ENCODE measurements at regions of chr4 and their contacts with region 1.

Region 1: DNA sequence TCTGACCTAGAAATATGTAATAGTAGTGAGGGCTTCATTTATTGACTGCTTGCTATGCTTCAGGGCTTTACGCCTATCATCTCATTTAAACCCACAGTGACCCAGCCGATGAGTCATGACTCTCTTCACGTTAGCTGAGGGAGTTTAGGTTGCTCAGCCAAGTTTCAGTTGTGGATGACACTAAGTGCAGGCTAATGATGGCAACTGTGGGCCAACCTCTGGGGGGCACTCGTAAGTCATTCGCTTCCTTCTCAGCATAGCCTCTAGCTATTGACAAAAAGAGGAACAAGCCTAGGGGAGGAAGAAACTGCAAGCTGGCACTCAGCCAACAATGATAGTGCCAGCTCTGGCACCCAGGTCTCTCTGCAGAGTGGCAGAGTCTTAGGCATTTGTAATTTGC is 325.0 kb downstream of the ARHGAP10 start:
- DNase-seq: peak; percentile 30 to 80 (median 73)
- ATAC-seq: peak; percentile 59
- H3K4me3 ChIP-seq: no peak overlapping the region
- H3K4me3 Mint-ChIP-seq: peak overlapping the region; percentile 33
- H3K27ac ChIP-seq: peak overlapping the region in 1 of 2 experiments; percentile 32
- H3K27ac Mint-ChIP-seq: peak overlapping the region; percentile 94
- H3K4me1 ChIP-seq: peaks cover 94% of the 10 kb centered on the region
- H3K4me1 Mint-ChIP-seq: peaks cover 93% of the 10 kb centered on the region
- H3K27me3 ChIP-seq: no peaks in the 10 kb centered on the region
- H3K27me3 Mint-ChIP-seq: no peaks in the 10 kb centered on the region
- CTCF ChIP-seq: no peak

Region 2: GRCh38 chr4:147617173-147617840 is 439.6 kb before region 1 on chr4 and contains the start of gene TMEM184C:
- CTCF ChIA-PET with region 1: no interaction called
- POLR2A ChIA-PET with region 1: no interaction called
- intact Hi-C with region 1: loop called in 1 of 2 experiments (anchors 10 kb)
- DNase-seq: peak; percentile 98 to 99 (median 99)
- ATAC-seq: peak; percentile 96
- H3K4me3 ChIP-seq: peak within 1 kb of the TSS; percentile 62 to 74
- H3K4me3 Mint-ChIP-seq: peak within 1 kb of the TSS; percentile 91
- H3K27ac ChIP-seq: peak within 1 kb of the TSS; percentile 81
- H3K27ac Mint-ChIP-seq: peak within 1 kb of the TSS; percentile 95
- H3K4me1 ChIP-seq: peaks cover 40% of the 10 kb centered on the region
- H3K4me1 Mint-ChIP-seq: peaks cover 46% of the 10 kb centered on the region
- H3K27me3 ChIP-seq: no peaks in the 10 kb centered on the region
- H3K27me3 Mint-ChIP-seq: no peaks in the 10 kb centered on the region
- CTCF ChIP-seq: no peak
- total RNA-seq, gene TMEM184C: 10.9 to 11.7 TPM

Region 3: GRCh38 chr4:147924604-147925412 is 132.1 kb before region 1 on chr4:
- CTCF ChIA-PET with region 1: no interaction called
- POLR2A ChIA-PET with region 1: no interaction called
- intact Hi-C with region 1: loop called in 1 of 2 experiments (anchors 10 kb)
- DNase-seq: peak in 2 of 9 experiments; percentile 18 to 31
- ATAC-seq: no peak
- H3K4me3 ChIP-seq: no peak overlapping the region
- H3K4me3 Mint-ChIP-seq: no peak overlapping the region
- H3K27ac ChIP-seq: no peak overlapping the region
- H3K27ac Mint-ChIP-seq: no peak overlapping the region
- H3K4me1 ChIP-seq: no peaks in the 10 kb centered on the region
- H3K4me1 Mint-ChIP-seq: no peaks in the 10 kb centered on the region
- H3K27me3 ChIP-seq: no peaks in the 10 kb centered on the region
- H3K27me3 Mint-ChIP-seq: no peaks in the 10 kb centered on the region
- CTCF ChIP-seq: no peak

Region 4: DNA sequence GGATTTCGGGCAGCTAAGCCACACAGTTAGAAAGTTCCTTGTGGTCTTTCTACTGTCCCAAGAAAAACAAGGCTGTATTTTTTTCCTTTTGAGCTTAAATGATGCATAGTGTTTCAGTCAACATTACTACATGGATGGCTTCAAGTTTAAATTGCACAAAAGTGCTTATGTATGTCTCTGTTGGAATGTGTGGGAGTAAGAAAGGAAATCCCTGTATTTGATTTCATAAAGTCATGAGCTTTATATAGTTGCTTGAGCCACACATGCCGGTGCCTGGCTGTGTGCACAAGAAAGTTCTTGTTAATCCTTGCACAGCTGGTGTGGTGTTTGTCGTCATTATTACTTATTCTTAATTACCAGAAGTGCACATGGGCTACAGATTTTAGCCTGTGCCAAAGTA is 62.8 kb before region 1 on chr4:
- CTCF ChIA-PET with region 1: no interaction called
- POLR2A ChIA-PET with region 1: no interaction called
- intact Hi-C with region 1: no loop called
- DNase-seq: no peak
- ATAC-seq: no peak
- H3K4me3 ChIP-seq: no peak overlapping the region
- H3K4me3 Mint-ChIP-seq: no peak overlapping the region
- H3K27ac ChIP-seq: no peak overlapping the region
- H3K27ac Mint-ChIP-seq: no peak overlapping the region
- H3K4me1 ChIP-seq: no peaks in the 10 kb centered on the region
- H3K4me1 Mint-ChIP-seq: no peaks in the 10 kb centered on the region
- H3K27me3 ChIP-seq: no peaks in the 10 kb centered on the region
- H3K27me3 Mint-ChIP-seq: no peaks in the 10 kb centered on the region
- CTCF ChIP-seq: no peak

Region 5: DNA sequence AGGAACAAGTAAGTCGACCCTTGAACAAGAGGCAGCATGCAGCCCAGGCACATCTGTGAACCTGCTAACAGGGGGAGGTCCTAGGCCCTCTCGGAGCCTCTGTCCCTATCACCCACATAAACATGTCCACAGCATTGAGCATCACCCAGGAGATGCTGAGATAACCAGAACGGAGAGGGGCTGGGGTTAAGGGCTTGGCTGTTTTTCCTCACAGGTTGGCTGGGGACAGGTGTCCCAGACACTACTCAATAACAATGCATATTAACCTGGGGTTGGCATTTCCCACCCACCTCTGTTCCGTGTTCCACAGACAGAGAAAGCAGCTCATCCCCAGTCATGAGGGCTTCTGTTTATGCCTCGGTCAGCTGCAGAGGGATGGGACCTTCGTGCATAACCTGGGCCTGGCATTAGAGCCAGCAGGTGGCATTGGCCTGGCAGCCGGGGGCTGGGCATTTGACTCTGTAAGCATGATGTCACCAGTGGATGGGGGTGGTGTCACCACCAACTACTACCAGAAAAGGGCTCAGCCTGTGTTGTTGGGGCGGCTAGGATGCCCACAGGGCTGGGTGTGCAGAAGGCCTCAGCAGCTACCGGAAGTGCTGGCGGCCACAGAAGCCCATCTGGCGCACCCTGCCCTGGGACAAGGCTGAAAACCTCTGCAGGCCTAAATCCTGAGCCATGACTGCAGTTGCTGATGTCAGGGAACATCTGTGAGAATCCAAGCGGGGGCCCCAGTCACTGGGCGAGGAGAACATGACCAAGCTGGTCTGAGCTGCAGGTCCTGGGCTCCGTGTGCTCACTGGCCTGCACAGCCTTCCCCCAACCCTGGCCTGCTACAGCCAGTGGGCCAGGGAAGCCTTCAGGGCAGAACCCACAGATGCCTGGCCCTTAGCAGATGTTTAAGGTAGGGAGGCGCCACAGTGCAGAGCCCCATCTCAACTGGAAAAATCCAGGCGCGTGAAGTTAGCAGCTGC is 33.9 kb after region 1 on chr4:
- CTCF ChIA-PET with region 1: no interaction called
- POLR2A ChIA-PET with region 1: no interaction called
- intact Hi-C with region 1: no loop called
- DNase-seq: no peak
- ATAC-seq: no peak
- H3K4me3 ChIP-seq: no peak overlapping the region
- H3K4me3 Mint-ChIP-seq: no peak overlapping the region
- H3K27ac ChIP-seq: no peak overlapping the region
- H3K27ac Mint-ChIP-seq: peak overlapping the region; percentile 55
- H3K4me1 ChIP-seq: no peaks in the 10 kb centered on the region
- H3K4me1 Mint-ChIP-seq: peaks cover 38% of the 10 kb centered on the region
- H3K27me3 ChIP-seq: no peaks in the 10 kb centered on the region
- H3K27me3 Mint-ChIP-seq: no peaks in the 10 kb centered on the region
- CTCF ChIP-seq: no peak

Region 6: GRCh38 chr4:148112231-148112982 is 55.5 kb after region 1 on chr4:
- CTCF ChIA-PET with region 1: no interaction called
- POLR2A ChIA-PET with region 1: interaction called, 3 read pairs
- intact Hi-C with region 1: loop called in 1 of 2 experiments (anchors 5 kb)
- DNase-seq: no peak
- ATAC-seq: no peak
- H3K4me3 ChIP-seq: no peak overlapping the region
- H3K4me3 Mint-ChIP-seq: no peak overlapping the region
- H3K27ac ChIP-seq: no peak overlapping the region
- H3K27ac Mint-ChIP-seq: peak overlapping the region; percentile 77
- H3K4me1 ChIP-seq: peaks cover 27% of the 10 kb centered on the region
- H3K4me1 Mint-ChIP-seq: peaks cover 53% of the 10 kb centered on the region
- H3K27me3 ChIP-seq: no peaks in the 10 kb centered on the region
- H3K27me3 Mint-ChIP-seq: no peaks in the 10 kb centered on the region
- CTCF ChIP-seq: no peak

Region 7: GRCh38 chr4:148376151-148376550 is 319.3 kb after region 1 on chr4:
- CTCF ChIA-PET with region 1: no interaction called
- POLR2A ChIA-PET with region 1: interaction called, 5 read pairs
- intact Hi-C with region 1: loop called (anchors 2 to 10 kb)
- DNase-seq: peak; percentile 4 to 86 (median 61)
- ATAC-seq: peak; percentile 85
- H3K4me3 ChIP-seq: peak overlapping the region; percentile 24 to 30
- H3K4me3 Mint-ChIP-seq: peak overlapping the region; percentile 79
- H3K27ac ChIP-seq: peak overlapping the region; percentile 60 to 70
- H3K27ac Mint-ChIP-seq: peak overlapping the region; percentile 93
- H3K4me1 ChIP-seq: peaks cover 22% of the 10 kb centered on the region
- H3K4me1 Mint-ChIP-seq: peaks cover 46% of the 10 kb centered on the region
- H3K27me3 ChIP-seq: no peaks in the 10 kb centered on the region
- H3K27me3 Mint-ChIP-seq: no peaks in the 10 kb centered on the region
- CTCF ChIP-seq: no peak

Region 8: DNA sequence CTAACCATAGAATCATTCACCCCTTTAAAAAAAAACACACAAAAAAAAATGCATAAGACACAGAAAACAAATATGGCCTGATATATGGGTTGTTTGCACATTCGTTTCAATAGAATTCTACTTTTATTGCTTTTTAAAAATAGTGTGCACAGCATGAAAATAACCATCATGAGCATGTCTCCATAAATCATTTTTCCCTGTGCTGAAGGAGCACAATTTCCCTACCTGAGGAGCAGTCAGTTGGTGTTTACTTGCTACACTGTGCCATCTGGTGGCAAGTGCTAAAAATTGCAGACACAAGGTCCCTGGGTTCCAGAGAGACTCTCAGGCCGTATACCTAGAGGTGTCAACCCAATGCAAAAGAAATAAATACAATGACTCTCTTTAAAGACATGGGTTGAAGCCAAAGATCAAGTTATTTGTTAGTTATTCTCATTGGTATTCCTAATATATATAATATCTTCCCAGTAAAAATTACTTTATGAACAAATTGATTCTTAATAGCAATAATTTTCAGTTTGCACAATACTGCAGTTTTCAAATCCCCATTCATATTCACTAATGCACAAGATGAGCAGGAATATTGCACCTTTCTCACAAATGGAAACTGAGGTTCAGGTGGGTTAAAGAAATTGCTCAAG is 1207.3 kb after region 1 on chr4:
- CTCF ChIA-PET with region 1: no interaction called
- POLR2A ChIA-PET with region 1: no interaction called
- intact Hi-C with region 1: no loop called
- DNase-seq: peak in 2 of 9 experiments; percentile 20 to 23
- ATAC-seq: no peak
- H3K4me3 ChIP-seq: no peak overlapping the region
- H3K4me3 Mint-ChIP-seq: no peak overlapping the region
- H3K27ac ChIP-seq: no peak overlapping the region
- H3K27ac Mint-ChIP-seq: no peak overlapping the region
- H3K4me1 ChIP-seq: no peaks in the 10 kb centered on the region
- H3K4me1 Mint-ChIP-seq: no peaks in the 10 kb centered on the region
- H3K27me3 ChIP-seq: no peaks in the 10 kb centered on the region
- H3K27me3 Mint-ChIP-seq: no peaks in the 10 kb centered on the region
- CTCF ChIP-seq: no peak

Measured in CD8-positive, alpha-beta T cell (primary cell).